Activated naive CD4-positive, alpha-beta T cell treated with anti-CD3 and anti-CD28 coated beads for 36 hours (primary cell): ENCODE measurements at regions of chr7 and their contacts with region 1.

Region 1: DNA sequence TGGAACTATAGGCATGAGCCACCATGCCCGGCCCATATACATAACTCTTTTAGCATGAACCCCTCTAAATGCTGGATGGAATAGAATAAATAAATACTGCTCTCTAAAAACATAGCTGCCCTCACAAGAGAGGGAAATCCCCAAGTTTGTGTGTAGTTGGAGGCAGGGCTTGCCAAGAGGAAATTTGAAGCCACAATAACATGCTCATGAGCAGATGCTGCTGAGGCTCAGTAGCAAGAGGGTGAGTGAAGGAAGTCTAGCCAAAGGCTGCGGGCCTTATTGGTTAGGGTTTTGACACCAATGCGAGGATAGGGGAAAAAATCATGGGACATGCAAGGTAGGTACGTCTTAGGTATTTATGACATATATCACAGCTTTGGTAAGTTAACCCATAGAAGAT is 17.3 kb downstream of the TPK1 start:
- DNase-seq: peak; percentile 80
- H3K4me3 Mint-ChIP-seq: peak overlapping the region; percentile 35
- H3K27ac Mint-ChIP-seq: peak overlapping the region; percentile 94
- H3K4me1 Mint-ChIP-seq: peaks cover 76% of the 10 kb centered on the region
- H3K27me3 Mint-ChIP-seq: no peaks in the 10 kb centered on the region

Region 2: DNA sequence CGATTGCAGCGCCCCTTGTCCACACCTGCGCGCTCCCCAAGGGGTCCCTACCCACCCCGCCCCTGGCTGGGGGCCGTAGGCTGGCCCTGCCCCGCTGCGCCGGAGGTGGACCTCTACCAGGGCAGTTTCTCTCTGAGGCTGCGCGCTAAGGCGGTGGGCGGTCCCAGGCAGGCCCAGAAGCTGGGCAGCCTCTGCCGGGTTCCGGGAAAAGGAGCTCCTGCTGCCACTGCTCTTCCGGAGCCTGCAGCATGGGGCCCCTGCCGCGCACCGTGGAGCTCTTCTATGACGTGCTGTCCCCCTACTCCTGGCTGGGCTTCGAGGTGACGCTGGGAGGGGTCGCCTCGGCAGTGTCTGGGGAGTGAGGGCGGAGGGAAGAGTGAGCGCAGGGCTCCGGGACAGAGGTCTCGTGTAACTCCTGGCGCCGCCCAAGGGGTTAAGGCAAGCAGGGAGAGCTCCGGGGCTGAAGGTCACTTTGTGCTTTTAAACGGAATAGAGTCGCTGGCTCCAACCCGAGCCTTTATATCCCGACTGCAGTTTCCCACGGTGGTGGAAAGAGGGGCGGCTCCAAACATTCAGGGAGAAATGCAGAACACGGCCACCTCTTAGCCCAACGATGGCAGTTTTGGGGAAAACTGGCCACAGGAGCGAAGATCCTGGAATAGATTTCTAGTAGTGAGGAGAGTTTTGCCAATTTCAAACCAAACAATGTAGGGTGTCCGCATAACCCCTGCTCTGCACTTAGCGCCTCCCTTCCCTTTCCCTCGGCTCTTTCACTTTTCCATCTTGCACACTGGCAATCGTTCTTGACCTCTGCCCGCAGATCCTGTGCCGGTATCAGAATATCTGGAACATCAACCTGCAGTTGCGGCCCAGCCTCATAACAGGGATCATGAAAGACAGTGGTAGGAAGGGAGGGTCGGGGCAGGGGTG is 1555.0 kb before region 1 on chr7 and contains the start of gene GSTK1:
- CTCF ChIA-PET with region 1: no interaction called
- intact Hi-C with region 1: loop called (anchors 10 kb)
- DNase-seq: peak; percentile 90
- H3K4me3 Mint-ChIP-seq: peak within 1 kb of the TSS; percentile 96
- H3K27ac Mint-ChIP-seq: peak within 1 kb of the TSS; percentile 96
- H3K4me1 Mint-ChIP-seq: peaks cover 55% of the 10 kb centered on the region
- H3K27me3 Mint-ChIP-seq: no peaks in the 10 kb centered on the region
- total RNA-seq, gene GSTK1: 186 to 187 TPM

Region 3: GRCh38 chr7:144805627-144806239 is 12.8 kb before region 1 on chr7:
- CTCF ChIA-PET with region 1: interaction called, 17 read pairs
- intact Hi-C with region 1: loop called (anchors 1 kb)
- DNase-seq: no peak
- H3K4me3 Mint-ChIP-seq: no peak overlapping the region
- H3K27ac Mint-ChIP-seq: no peak overlapping the region
- H3K4me1 Mint-ChIP-seq: peaks cover 63% of the 10 kb centered on the region
- H3K27me3 Mint-ChIP-seq: no peaks in the 10 kb centered on the region

Region 4: GRCh38 chr7:144830024-144830785 is 11.7 kb after region 1 on chr7:
- CTCF ChIA-PET with region 1: interaction called, 30 read pairs
- intact Hi-C with region 1: loop called (anchors 1 kb)
- DNase-seq: peak; percentile 30
- H3K4me3 Mint-ChIP-seq: no peak overlapping the region
- H3K27ac Mint-ChIP-seq: peak overlapping the region; percentile 14
- H3K4me1 Mint-ChIP-seq: peaks cover 59% of the 10 kb centered on the region
- H3K27me3 Mint-ChIP-seq: no peaks in the 10 kb centered on the region

Region 5: DNA sequence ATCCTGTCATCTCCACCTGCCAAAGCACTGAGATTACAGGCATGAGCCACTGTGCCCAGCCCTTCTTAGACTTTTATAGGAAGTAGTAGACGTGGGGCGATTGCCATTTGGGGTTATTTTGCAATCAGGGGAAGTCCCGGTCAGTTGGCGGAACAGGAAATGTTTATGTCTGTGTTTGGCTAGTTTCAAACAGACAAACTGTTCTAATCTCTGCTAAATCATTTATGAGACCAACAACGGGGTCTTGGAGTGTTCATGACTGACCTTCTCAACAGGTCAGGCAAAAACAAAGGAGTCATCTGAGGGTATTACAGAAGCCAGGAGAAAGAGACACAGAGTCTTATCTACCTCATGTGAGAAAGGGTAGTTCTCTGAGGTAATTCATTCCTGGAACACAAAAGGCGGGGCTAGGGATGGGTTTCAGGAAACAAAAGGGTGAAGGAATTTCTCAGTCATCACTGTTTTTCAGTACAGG is 23.9 kb after region 1 on chr7:
- CTCF ChIA-PET with region 1: no interaction called
- intact Hi-C with region 1: loop called (anchors 1 kb)
- DNase-seq: peak; percentile 69
- H3K4me3 Mint-ChIP-seq: peak overlapping the region; percentile 15
- H3K27ac Mint-ChIP-seq: peak overlapping the region; percentile 89
- H3K4me1 Mint-ChIP-seq: peaks cover 24% of the 10 kb centered on the region
- H3K27me3 Mint-ChIP-seq: no peaks in the 10 kb centered on the region

Region 6: DNA sequence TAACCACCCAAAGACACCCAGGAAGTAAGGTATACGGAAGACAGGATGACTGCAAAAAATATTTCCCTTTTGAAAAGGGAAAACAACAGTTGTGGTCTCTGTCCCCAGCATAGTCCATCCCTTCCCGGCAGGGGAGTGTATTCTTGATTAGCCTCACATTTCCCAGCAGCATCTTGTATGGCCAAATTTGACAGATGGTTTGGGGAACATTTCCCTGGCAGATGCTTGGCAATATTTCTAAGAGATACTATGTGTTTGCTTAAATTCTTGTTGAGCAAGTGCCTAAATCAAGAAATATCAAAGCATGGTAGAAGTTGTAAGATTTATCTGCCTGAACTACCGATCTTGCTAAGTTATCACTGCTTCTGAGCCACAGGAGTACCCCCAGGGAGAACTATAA is 74.2 kb after region 1 on chr7:
- CTCF ChIA-PET with region 1: no interaction called
- intact Hi-C with region 1: no loop called
- DNase-seq: no peak
- H3K4me3 Mint-ChIP-seq: no peak overlapping the region
- H3K27ac Mint-ChIP-seq: no peak overlapping the region
- H3K4me1 Mint-ChIP-seq: no peaks in the 10 kb centered on the region
- H3K27me3 Mint-ChIP-seq: no peaks in the 10 kb centered on the region